ENCODE measurements at regions of chr10 and their contacts with region 1.

Region 1: GRCh38 chr10:43348511-43349312 is 22.7 kb upstream of the FXYD4 start:
- DNase-seq: peak; percentile 92 to 95 (median 94)
- ATAC-seq: peak; percentile 99
- H3K4me3 ChIP-seq: no peak overlapping the region
- H3K27ac ChIP-seq: no peak overlapping the region
- H3K4me1 ChIP-seq: peaks cover 0 to 6% of the 10 kb centered on the region in 2 experiments; a peak in 2 of 5 replicates
- H3K27me3 ChIP-seq: peaks cover 15 to 27% of the 10 kb centered on the region in 2 experiments; a peak in 4 of 5 replicates
- CTCF ChIP-seq: peak; percentile 98 to 99 (median 99)
- EP300 ChIP-seq: no peak
- POLR2A ChIP-seq: no peak
- RAD21 ChIP-seq: peak; percentile 96 to 97

Region 2: DNA sequence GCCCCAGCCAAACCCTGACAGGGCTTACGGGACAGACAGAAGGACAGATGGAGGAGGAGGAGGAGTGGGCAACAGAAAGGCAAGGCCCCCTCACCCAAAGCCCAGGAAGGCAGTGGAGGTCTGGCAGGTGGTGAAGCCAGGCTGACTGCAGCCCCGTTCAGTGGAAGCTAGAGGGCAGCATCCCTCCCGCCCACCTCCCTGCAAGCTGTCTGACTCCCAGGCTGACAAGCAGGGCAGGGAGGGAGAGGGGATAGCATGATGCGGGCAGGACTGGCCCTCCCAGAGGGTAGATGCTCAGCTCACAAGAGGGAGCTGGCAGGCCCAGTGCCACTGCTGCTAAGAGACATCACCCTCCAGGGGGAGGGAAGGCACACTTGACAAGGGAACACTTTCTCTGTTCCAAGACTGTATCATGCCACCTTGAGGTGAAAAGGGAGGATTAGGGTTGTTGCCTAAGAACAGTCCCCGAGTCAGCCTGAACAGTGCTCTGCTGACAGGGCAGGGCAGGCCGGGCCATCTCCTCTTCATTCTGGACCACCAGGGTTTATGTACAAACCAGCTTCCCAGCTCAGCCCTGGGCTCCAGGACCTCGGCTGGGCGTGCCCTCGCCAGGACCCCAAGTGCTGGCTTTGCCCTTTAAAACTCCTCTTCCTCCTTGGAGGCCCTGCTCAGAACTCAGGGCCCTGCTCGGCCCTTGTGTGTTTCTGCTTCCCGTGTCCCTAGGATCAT is 143.6 kb before region 1 on chr10:
- CTCF ChIA-PET with region 1: no interaction called
- POLR2A ChIA-PET with region 1: no interaction called
- in situ Hi-C with region 1: no loop called
- intact Hi-C with region 1: loop called (anchors 1 kb)
- DNase-seq: peak; percentile 64 to 83 (median 68)
- ATAC-seq: peak; percentile 41
- H3K4me3 ChIP-seq: no peak overlapping the region
- H3K27ac ChIP-seq: no peak overlapping the region
- H3K4me1 ChIP-seq: peaks cover 10 to 66% of the 10 kb centered on the region in 2 experiments; a peak in 3 of 5 replicates
- H3K27me3 ChIP-seq: 0 out of 5 replicates have a peak, but pooled peaks cover 0 to 8% of the 10 kb centered on the region in 2 experiments
- CTCF ChIP-seq: peak; percentile 78 to 94 (median 94)
- EP300 ChIP-seq: no peak
- POLR2A ChIP-seq: no peak
- RAD21 ChIP-seq: peak; percentile 22 to 66; a peak in 3 of 4 replicates

Region 3: GRCh38 chr10:43299579-43299978 is 49.1 kb before region 1 on chr10:
- CTCF ChIA-PET with region 1: no interaction called
- POLR2A ChIA-PET with region 1: no interaction called
- in situ Hi-C with region 1: loop called (anchors 5 kb)
- intact Hi-C with region 1: no loop called
- DNase-seq: no peak
- ATAC-seq: no peak
- H3K4me3 ChIP-seq: no peak overlapping the region
- H3K27ac ChIP-seq: no peak overlapping the region
- H3K4me1 ChIP-seq: peaks cover 0 to 1% of the 10 kb centered on the region in 2 experiments; a peak in 2 of 5 replicates
- H3K27me3 ChIP-seq: peaks cover 32 to 45% of the 10 kb centered on the region in 2 experiments
- CTCF ChIP-seq: no peak
- EP300 ChIP-seq: no peak
- POLR2A ChIP-seq: no peak
- RAD21 ChIP-seq: no peak

Region 4: DNA sequence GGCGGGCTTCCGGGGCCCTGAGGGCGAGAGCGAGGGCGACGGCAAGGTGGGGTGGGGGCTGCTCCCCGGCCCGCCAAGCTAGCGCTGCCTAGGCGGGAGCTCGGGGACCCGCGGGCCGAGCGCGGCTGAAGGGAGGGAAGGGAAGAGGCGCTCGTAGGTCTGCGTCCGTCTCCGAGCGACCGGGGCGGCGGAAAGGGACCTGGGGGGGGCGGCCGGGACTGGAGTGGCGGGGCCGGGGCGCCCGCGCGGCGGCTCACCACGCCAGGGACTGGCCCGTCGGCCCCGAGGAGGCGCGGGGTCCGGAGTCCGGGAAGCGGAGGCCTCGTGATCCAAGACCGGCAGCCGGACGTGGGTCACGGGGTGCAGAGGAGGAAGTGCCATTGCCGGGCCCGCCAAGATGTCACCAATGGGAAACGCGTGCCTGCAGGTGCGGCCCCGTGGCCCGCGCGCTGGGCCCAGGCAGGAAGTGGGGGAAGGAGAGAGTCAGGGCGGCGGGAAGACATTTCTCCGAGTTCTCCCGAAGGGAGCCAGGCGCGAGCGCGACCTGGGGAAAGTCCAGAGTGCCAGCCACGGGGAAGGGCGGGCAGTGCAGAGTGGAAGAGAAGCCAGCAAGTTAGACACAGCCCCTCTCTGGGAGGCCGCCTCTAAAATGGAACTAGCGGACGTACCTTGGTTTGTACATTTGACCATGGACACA is 48.4 kb after region 1 on chr10:
- CTCF ChIA-PET with region 1: no interaction called
- POLR2A ChIA-PET with region 1: interaction called, 3 read pairs
- in situ Hi-C with region 1: no loop called
- intact Hi-C with region 1: loop called (anchors 5 kb)
- DNase-seq: peak in 2 of 4 experiments; percentile 91 to 95
- ATAC-seq: peak; percentile 74
- H3K4me3 ChIP-seq: peak overlapping the region; percentile 65
- H3K27ac ChIP-seq: peak overlapping the region; percentile 96
- H3K4me1 ChIP-seq: peaks cover 46 to 58% of the 10 kb centered on the region in 2 experiments
- H3K27me3 ChIP-seq: no peaks in the 10 kb centered on the region
- CTCF ChIP-seq: no peak
- EP300 ChIP-seq: 0 out of 2 replicates have a peak, but pooled peaks have one; percentile 13
- POLR2A ChIP-seq: peak; percentile 91
- RAD21 ChIP-seq: peak in 1 of 2 experiments; percentile 19; a peak in 3 of 4 replicates

Region 5: GRCh38 chr10:43471935-43472720 is 123.4 kb after region 1 on chr10:
- CTCF ChIA-PET with region 1: no interaction called
- POLR2A ChIA-PET with region 1: no interaction called
- in situ Hi-C with region 1: no loop called
- intact Hi-C with region 1: no loop called
- DNase-seq: no peak
- ATAC-seq: no peak
- H3K4me3 ChIP-seq: no peak overlapping the region
- H3K27ac ChIP-seq: no peak overlapping the region
- H3K4me1 ChIP-seq: peaks cover 0 to 4% of the 10 kb centered on the region in 2 experiments; a peak in 2 of 5 replicates
- H3K27me3 ChIP-seq: peaks cover 12 to 40% of the 10 kb centered on the region in 2 experiments
- CTCF ChIP-seq: no peak
- EP300 ChIP-seq: no peak
- POLR2A ChIP-seq: no peak
- RAD21 ChIP-seq: no peak

Region 6: DNA sequence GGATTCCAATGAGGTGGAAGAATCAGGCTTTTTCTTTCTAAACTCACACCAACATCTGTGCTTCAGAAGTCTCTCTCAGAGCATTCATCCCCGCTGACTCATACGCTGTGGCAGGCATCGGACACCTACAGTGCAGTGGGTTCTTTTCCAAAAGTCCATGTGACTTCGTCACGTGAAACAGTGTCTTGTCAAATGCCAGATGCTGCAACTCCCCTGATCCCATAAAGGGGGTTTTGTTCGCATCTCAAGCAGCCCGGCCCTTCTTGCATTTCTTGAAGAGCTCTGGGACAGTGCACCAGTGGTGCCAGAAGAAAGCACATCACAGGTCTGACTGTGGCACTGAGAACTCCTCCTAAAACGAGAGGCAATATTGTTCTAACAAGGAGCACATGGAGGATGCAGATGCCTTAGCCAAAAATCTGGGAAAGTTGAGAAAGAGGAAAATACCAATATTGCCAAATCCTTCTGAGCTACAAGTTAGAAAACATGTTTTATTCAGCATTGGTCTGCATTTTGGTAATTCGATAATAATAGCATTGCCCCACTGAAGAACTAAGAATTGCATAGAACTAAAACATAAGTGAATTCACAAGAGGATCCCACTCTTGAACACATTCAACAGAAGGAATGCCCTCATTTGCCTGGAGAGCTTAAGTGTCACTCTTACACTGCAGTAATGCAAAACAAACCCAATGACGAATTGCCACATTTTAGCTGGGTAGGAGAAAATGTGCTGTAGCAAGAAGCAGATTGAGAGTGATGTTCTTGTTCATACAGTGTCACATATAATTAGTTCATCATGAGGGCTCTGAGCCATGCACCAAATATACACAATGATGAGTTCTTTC is 831.8 kb after region 1 on chr10:
- CTCF ChIA-PET with region 1: no interaction called
- POLR2A ChIA-PET with region 1: no interaction called
- in situ Hi-C with region 1: no loop called
- intact Hi-C with region 1: no loop called
- DNase-seq: no peak
- ATAC-seq: no peak
- H3K4me3 ChIP-seq: no peak overlapping the region
- H3K27ac ChIP-seq: no peak overlapping the region
- H3K4me1 ChIP-seq: no peaks in the 10 kb centered on the region
- H3K27me3 ChIP-seq: peaks cover 6 to 18% of the 10 kb centered on the region in 2 experiments; a peak in 4 of 5 replicates
- CTCF ChIP-seq: no peak
- EP300 ChIP-seq: no peak
- POLR2A ChIP-seq: no peak
- RAD21 ChIP-seq: no peak

Measured in K562 (cell line).